B cell (primary cell): ENCODE measurements at regions of chr19 and their contacts with region 1.

Region 1: DNA sequence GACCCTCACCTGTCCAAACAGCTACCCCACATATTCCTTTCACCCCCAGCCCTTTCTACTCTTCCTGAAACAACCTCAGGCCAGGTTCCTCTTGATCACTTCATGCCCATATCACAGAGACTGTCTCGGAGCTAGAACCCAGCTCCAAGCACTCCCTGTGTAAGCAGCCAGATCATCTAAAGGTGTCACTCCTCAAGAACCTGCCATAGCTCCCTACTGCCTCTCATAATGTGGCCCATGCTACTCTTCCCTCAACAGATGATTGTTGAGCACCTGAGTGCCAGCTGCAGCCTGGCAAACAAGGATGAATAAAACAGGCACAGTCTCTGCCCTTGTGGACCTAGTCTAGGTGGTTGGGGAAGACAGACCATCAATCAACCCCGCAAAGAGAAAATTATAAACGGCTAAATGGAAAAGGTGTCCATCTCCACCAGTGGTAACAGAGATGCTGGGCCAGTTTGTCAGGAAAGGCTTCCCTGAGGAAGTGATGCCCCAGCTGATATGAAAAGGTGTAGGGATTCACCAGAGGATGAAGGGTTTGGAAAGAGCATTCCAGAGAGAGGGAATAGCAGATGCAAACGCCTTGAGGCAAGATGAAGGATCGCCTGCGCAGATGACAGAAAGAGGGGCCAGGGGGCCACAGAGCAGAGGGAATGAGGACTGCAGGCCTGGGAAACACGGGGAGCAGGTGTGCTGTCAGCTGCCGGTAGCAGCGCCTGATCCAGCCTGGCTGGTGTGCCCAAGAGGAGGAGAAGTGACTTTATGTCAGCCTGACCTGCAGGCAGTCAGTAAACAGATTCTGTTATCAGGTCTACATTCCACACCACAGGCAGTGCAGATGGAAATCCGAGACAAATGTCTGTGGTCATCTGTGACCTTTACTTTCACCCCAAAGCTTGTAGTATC is 8.2 kb downstream of the EPS15L1 start:
- DNase-seq: no peak
- ATAC-seq: no peak
- H3K4me3 ChIP-seq: no peak overlapping the region
- H3K4me3 Mint-ChIP-seq: no peak overlapping the region
- H3K27ac ChIP-seq: no peak overlapping the region
- H3K27ac Mint-ChIP-seq: peak overlapping the region; percentile 39
- H3K4me1 ChIP-seq: peaks cover 20 to 29% of the 10 kb centered on the region in 2 donors
- H3K4me1 Mint-ChIP-seq: peaks cover 71% of the 10 kb centered on the region
- H3K27me3 ChIP-seq: no peaks in the 10 kb centered on the region
- H3K27me3 Mint-ChIP-seq: no peaks in the 10 kb centered on the region
- CTCF ChIP-seq: no peak

Region 2: GRCh38 chr19:16452347-16452878 is 11.2 kb before region 1 on chr19:
- CTCF ChIA-PET with region 1: no interaction called
- POLR2A ChIA-PET with region 1: interaction called, 11 read pairs
- intact Hi-C with region 1: no loop called
- DNase-seq: no peak
- ATAC-seq: no peak
- H3K4me3 ChIP-seq: no peak overlapping the region
- H3K4me3 Mint-ChIP-seq: no peak overlapping the region
- H3K27ac ChIP-seq: no peak overlapping the region
- H3K27ac Mint-ChIP-seq: no peak overlapping the region
- H3K4me1 ChIP-seq: peaks cover 46 to 49% of the 10 kb centered on the region in 2 donors
- H3K4me1 Mint-ChIP-seq: peaks cover 58% of the 10 kb centered on the region
- H3K27me3 ChIP-seq: no peaks in the 10 kb centered on the region
- H3K27me3 Mint-ChIP-seq: no peaks in the 10 kb centered on the region
- CTCF ChIP-seq: no peak

Region 3: GRCh38 chr19:17376935-17377600 is 913.5 kb after region 1 on chr19 and contains the start of gene PLVAP:
- CTCF ChIA-PET with region 1: no interaction called
- POLR2A ChIA-PET with region 1: interaction called, 13 read pairs
- intact Hi-C with region 1: no loop called
- DNase-seq: no peak
- ATAC-seq: no peak
- H3K4me3 ChIP-seq: no peak within 1 kb of the TSS
- H3K4me3 Mint-ChIP-seq: no peak within 1 kb of the TSS
- H3K27ac ChIP-seq: no peak within 1 kb of the TSS
- H3K27ac Mint-ChIP-seq: no peak within 1 kb of the TSS
- H3K4me1 ChIP-seq: peaks cover 15 to 27% of the 10 kb centered on the region in 2 donors
- H3K4me1 Mint-ChIP-seq: peaks cover 19% of the 10 kb centered on the region
- H3K27me3 ChIP-seq: peaks cover 0 to 33% (median 5%) of the 10 kb centered on the region in 4 experiments
- H3K27me3 Mint-ChIP-seq: peaks cover 19% of the 10 kb centered on the region
- CTCF ChIP-seq: no peak
- total RNA-seq, gene PLVAP: not detected in 2 replicates